ENCODE measurements at regions of chr22 and their contacts with region 1.

Region 1: DNA sequence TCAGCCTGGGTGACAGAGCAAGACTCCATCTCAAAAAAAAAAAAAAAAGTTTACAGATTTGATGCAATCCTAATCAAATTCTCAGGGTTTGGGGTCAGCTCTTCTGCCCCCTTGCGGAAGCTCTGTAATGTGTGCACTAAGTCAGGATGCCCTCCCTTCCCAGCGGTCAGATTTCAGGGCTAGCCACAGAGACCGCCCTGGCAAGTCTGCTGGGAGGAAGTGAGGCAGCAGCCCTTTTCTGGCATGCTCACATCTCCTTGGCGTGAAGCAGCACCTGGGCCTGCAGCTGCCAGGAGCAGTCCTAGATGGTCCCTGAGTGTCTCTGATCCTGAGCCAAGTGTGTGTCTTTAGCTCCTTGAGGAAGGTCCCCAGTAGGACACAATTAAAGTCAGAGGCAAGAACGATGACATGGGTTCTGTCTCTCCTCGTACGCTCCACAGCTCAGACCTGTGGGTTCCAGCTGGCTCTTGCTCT is 10.9 kb upstream of the APOBEC3C start:
- DNase-seq: peak; percentile 68 to 74
- ATAC-seq: peak; percentile 95 to 97
- H3K4me3 ChIP-seq: no peak overlapping the region
- H3K27ac ChIP-seq: peak overlapping the region in 1 of 2 experiments; percentile 29; a peak in 2 of 6 replicates
- H3K4me1 ChIP-seq: peaks cover 3% of the 10 kb centered on the region; the same call in 1 of the 3 replicates
- CTCF ChIP-seq: peak; percentile 64
- EP300 ChIP-seq: no peak
- POLR2A ChIP-seq: no peak
- RAD21 ChIP-seq: peak; percentile 63 to 71

Region 2: GRCh38 chr22:38901111-38901641 is 102.0 kb before region 1 on chr22:
- CTCF ChIA-PET with region 1: no interaction called
- POLR2A ChIA-PET with region 1: no interaction called
- DNase-seq: no peak
- ATAC-seq: no peak
- H3K4me3 ChIP-seq: no peak overlapping the region
- H3K27ac ChIP-seq: no peak overlapping the region
- H3K4me1 ChIP-seq: no peaks in the 10 kb centered on the region
- CTCF ChIP-seq: no peak
- EP300 ChIP-seq: no peak
- POLR2A ChIP-seq: no peak
- RAD21 ChIP-seq: no peak

Region 3: DNA sequence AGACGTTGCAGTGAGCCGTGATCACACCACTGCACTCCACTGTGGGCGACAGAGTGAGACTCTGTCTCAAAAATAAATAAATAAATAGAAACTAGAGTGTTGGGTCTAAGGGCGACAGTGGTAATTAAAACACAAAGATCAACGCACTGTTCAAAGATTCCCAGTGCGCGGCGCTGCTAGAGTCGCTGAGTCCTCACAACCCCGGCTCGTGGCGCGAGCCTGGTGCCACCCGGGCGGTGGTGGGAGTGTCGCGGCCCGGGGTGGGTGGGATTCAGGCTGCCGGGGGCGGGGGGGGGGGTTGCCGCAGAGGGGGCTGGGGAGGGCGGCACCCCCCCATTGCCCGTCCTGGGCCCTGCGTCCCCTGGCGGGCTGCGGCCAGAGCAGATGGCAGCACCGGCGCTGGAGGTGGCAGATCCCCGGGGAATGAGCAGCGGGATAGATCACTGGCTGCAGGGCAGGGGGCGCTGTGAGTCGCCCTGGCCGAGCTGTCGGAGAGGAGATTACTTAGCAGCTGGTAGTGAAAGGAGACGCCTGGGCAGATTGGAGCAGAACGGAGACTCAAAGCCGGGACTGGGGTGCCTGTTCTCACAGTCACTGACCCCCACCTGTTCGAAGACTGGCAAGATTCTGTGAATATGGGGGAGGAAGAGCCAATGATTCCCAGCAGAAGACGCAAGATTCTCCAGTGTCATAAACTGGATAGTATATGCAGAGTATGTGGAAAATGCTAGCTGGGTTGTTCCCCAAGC is 76.0 kb before region 1 on chr22:
- CTCF ChIA-PET with region 1: interaction called, 25 read pairs
- POLR2A ChIA-PET with region 1: no interaction called
- DNase-seq: peak; percentile 82 to 84
- ATAC-seq: peak; percentile 90
- H3K4me3 ChIP-seq: peak overlapping the region; percentile 46
- H3K27ac ChIP-seq: peak overlapping the region; percentile 72 to 96
- H3K4me1 ChIP-seq: peaks cover 23% of the 10 kb centered on the region
- CTCF ChIP-seq: peak; percentile 86
- EP300 ChIP-seq: no peak
- POLR2A ChIP-seq: no peak
- RAD21 ChIP-seq: peak; percentile 53 to 68

Region 4: DNA sequence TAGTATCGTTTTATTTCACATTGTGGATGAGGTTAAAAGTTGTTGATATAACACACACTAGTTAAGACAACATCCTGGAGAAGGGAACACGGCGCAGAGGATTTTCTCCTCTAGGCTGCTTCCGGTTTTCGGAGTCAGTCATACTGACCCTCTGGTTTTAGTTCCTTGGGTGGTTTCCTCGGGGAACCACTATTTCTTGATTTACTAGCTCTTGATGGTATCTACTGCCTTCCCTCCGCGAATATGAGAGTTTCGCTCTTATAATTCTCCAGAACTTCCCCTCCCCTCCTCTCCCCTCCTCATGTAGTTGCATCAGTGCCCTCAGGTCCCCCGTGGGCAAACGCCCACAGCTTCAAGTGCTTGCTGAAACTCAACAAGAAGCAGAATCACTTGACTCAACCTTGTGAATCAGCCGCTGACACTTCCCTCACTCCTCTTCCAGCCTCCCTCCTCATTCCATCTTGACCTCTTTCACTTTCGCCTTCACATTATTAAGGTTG is 61.7 kb before region 1 on chr22:
- CTCF ChIA-PET with region 1: no interaction called
- POLR2A ChIA-PET with region 1: no interaction called
- DNase-seq: no peak
- ATAC-seq: no peak
- H3K4me3 ChIP-seq: no peak overlapping the region
- H3K27ac ChIP-seq: no peak overlapping the region
- H3K4me1 ChIP-seq: no peaks in the 10 kb centered on the region
- CTCF ChIP-seq: no peak
- EP300 ChIP-seq: no peak
- POLR2A ChIP-seq: no peak
- RAD21 ChIP-seq: no peak

Region 5: DNA sequence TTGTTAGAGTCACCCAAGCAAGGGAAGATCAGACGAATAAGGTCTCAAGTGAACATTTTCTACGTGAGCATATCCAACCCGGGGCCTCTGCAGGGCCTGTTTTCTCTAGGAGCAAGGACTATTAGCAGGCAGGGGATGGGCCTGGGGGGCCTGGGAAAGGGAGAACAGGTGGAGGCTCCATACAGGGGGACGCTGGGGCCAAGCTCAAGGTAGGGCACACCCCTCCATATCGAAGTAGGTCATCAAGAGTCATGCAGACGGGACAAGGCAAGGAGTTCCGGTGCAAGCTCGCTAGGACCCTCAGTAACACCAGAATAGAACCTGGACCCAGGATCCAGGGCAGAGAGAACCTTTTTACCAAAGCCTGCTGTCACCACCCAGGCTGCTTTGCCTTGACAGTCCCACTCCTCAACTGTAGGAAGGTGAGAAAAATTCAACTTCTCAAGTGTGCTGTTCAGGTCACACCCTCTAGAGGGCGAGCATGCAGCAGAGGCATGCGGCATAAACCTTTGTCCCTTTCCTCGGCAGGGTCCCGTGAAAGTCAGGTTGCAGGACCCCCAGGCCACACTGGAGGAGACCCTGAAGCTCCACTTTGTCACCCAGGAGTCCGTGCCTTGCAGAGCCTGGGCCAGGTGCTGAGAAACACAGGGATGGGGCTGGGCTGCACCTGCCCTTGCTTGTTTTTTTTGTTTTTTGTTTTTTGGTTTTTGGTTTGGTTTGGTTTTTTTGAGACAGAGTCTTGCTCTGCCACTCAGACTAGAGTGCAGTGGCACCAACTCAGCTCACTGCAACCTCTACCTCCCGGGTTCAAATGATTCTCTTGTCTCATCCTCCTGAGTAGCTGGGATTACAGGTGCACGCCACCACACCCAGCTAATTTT is 29.7 kb before region 1 on chr22:
- CTCF ChIA-PET with region 1: interaction called, 28 read pairs
- POLR2A ChIA-PET with region 1: no interaction called
- DNase-seq: peak; percentile 41 to 58
- ATAC-seq: peak; percentile 81 to 86
- H3K4me3 ChIP-seq: no peak overlapping the region
- H3K27ac ChIP-seq: no peak overlapping the region
- H3K4me1 ChIP-seq: no peaks in the 10 kb centered on the region
- CTCF ChIP-seq: peak; percentile 53
- EP300 ChIP-seq: no peak
- POLR2A ChIP-seq: no peak
- RAD21 ChIP-seq: peak; percentile 53 to 59

Region 6: DNA sequence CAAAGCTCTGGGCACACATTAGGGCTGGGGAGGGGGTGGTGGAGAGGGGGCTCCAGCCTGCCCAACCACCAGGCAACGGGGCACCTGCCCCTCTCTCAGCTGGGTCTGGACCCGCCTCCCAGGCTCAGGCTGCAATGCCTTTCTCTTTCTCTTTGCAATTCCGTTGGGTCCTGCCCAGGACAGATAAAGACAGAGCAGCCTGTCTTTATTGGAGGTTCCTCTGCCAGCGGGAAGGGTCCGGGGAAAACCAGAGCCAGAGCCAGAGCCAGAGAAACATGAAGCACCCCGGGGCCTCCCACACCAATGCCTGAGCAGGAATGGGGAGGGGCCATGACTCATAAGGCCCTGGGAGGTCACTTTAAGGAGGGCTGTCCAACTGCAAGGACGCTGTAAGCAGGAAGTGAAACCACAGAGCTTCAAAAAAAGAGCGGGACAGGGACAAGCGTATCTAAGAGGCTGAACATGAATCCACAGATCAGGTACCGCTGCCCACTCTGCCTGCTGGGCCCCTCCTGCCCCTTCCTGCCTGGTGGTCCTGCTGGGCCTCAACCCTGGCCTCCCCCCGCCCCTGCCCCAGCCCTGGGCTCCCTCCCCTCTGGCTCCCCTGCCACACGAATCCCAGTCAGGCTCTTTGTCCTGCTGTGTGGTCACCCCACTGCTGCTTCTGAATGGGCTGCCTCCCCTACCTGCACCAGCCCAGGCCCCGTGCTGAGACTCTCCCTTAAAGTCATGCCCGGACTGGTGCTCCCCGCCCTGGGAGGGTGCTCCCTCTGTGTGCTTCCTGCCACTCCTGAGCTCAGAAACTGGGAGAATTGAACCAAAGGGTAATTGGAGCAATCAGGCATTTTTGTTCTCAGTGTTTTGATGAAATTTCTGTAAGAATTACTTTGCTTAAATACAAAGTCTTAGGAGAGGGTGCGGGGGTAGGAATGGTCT is 20.9 kb before region 1 on chr22 and contains the start of gene APOBEC3B:
- CTCF ChIA-PET with region 1: interaction called, 15 read pairs
- POLR2A ChIA-PET with region 1: no interaction called
- DNase-seq: peak; percentile 85 to 91
- ATAC-seq: peak; percentile 98 to 99
- H3K4me3 ChIP-seq: peak within 1 kb of the TSS; percentile 45
- H3K27ac ChIP-seq: peak within 1 kb of the TSS; percentile 75 to 95
- H3K4me1 ChIP-seq: peaks cover 13% of the 10 kb centered on the region; the same call in 2 of the 3 replicates
- CTCF ChIP-seq: no peak
- EP300 ChIP-seq: no peak
- POLR2A ChIP-seq: no peak
- RAD21 ChIP-seq: no peak
- polyA plus RNA-seq, gene APOBEC3B: 14.7 and 16.7 TPM in 2 replicates

Region 7: DNA sequence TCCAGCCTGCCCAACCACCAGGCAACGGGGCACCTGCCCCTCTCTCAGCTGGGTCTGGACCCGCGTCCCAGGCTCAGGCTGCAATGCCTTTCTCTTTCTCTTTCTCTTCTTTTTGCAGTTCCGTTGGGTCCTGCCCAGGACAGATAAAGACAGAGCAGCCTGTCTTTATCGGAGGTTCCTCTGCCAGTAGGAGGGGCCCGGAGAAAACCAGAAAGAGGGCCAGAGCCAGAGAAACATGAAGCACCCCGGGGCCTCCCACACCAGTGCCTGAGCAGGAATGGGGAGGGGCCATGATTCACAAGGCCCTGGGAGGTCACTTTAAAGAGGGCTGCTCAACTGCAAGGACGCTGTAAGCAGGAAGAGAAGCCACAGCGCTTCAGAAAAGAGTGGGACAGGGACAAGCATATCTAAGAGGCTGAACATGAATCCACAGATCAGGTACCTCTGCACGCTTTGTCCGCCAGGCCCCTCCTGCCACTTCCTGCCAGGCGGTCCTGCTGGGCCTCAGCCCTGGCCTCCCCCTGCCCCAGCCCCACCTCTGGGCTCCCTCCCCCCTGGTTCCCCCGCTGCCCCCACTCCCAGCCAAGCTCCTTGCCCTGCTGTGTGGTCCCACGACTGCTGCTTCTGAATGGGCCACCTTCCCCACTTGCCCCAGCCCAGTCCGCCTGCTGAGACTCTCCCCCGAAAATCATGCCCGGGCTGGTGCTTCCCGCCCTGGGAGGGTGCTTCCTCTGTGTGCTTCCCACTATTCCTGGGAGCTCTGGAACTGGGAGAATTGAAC is 10.9 kb after region 1 on chr22 and contains the start of gene APOBEC3C:
- CTCF ChIA-PET with region 1: interaction called, 14 read pairs
- POLR2A ChIA-PET with region 1: no interaction called
- DNase-seq: peak; percentile 58 to 80
- ATAC-seq: peak; percentile 95 to 98
- H3K4me3 ChIP-seq: peak within 1 kb of the TSS; percentile 66
- H3K27ac ChIP-seq: peak within 1 kb of the TSS; percentile 85 to 98
- H3K4me1 ChIP-seq: peaks cover 13% of the 10 kb centered on the region
- CTCF ChIP-seq: no peak
- EP300 ChIP-seq: no peak
- POLR2A ChIP-seq: peak; percentile 51
- RAD21 ChIP-seq: 0 out of 5 replicates have a peak, but pooled peaks of 1 of the 2 experiments have one; percentile 14
- polyA plus RNA-seq, gene APOBEC3C: 15.1 and 22.2 TPM in 2 replicates

Region 8: DNA sequence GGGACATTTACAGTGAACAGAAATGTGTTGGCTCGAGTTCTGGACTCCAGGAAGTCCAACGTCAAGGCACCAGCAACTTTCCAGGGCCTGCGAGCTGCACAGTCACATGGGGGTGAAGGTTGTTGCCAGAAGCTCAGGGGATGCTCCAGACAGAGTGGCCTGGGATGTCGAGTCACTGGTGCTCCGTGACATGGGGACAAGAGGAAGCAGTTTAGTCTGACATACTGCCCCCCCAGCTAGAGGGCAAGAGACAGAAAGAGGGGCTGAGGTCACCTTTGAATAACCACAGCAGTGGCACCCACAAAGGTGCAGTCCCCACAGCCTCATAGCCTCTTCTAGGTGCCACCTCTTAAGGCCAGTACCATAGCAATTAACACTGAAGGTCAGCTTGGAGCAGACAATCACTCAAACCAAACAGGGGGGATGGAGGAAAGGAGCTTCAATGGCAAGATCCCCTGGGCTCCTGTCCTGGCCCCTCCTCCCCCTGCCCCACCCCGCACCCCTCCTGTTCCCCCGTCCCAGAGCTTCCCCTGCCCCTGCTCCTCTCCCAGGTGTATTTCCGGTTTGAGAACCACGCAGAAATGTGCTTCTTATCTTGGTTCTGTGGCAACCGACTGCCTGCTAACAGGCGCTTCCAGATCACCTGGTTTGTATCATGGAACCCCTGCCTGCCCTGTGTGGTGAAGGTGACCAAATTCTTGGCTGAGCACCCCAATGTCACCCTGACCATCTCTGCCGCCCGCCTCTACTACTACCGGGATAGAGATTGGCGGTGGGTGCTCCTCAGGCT is 21.5 kb after region 1 on chr22:
- CTCF ChIA-PET with region 1: no interaction called
- POLR2A ChIA-PET with region 1: no interaction called
- DNase-seq: no peak
- ATAC-seq: no peak
- H3K4me3 ChIP-seq: no peak overlapping the region
- H3K27ac ChIP-seq: no peak overlapping the region
- H3K4me1 ChIP-seq: no peaks in the 10 kb centered on the region
- CTCF ChIP-seq: no peak
- EP300 ChIP-seq: no peak
- POLR2A ChIP-seq: no peak
- RAD21 ChIP-seq: no peak

Measured in A549 (cell line).